Prostate gland (tissue), 2 donors: ENCODE measurements at regions of chr1 and their contacts with region 1.

Region 1: GRCh38 chr1:16351994-16352841 is at the start of gene FBXO42:
- DNase-seq: peak; percentile 85
- H3K4me3 ChIP-seq: peak within 1 kb of the TSS; percentile 97 to 99
- H3K27ac ChIP-seq: peak within 1 kb of the TSS; percentile 96 to 98
- H3K4me1 ChIP-seq: peaks cover 3% of the 10 kb centered on the region
- H3K27me3 ChIP-seq: no peaks in the 10 kb centered on the region
- CTCF ChIP-seq: peak in 3 of 4 experiments; percentile 31 to 64 (median 61)
- POLR2A ChIP-seq: peak; percentile 97
- total RNA-seq, gene FBXO42: 26.6 to 52.6 TPM

Region 2: DNA sequence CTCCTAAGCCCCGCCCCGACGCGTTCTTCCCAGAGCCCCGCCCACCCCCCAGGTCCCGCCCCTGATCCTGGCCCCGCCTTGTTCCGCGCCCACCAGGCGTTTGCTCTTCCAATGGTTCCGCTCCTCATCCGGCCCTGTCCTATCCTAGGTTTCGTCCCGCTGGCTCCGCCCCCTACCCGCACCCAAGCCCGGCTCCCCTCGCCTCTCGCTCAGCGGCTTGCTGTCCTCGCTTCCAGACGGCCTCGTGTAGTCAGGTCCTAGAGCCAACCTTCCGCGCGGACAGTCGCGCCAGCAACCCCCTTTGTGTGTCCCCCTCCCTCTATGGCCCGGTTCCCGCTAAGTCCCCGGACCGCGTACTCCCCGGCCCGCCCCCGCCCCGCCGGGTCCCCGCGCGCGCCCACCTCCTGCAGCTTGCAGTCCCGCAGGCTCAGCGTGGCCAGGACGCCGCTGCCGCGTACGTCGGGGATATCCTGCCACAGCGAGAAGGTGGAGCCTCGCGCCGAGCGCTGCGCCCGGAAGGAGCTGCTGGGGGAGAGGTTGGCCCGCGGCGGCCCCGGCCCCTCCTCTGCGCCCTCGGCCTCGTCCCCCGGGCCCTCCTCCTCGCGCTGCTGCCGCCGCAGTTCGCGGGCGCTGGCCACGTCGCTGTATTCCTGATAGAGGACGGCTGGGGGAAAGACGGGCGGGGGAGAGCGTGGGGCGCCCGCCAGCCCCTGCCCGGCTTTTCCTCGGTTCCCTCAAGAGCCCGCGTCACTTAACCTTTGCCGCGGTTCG is 145.5 kb before region 1 on chr1:
- intact Hi-C with region 1: loop called (anchors 5 kb)
- DNase-seq: peak; percentile 98
- H3K4me3 ChIP-seq: peak overlapping the region; percentile 47
- H3K27ac ChIP-seq: peak overlapping the region; percentile 86 to 87
- H3K4me1 ChIP-seq: no peaks in the 10 kb centered on the region
- H3K27me3 ChIP-seq: no peaks in the 10 kb centered on the region
- CTCF ChIP-seq: no peak
- POLR2A ChIP-seq: peak; percentile 84